ENCODE measurements at regions of chr11 and their contacts with region 1.

Region 1: GRCh38 chr11:119095066-119095880 is 6.4 kb downstream of the DPAGT1 start:
- DNase-seq: peak; percentile 99 to 100
- H3K4me3 ChIP-seq: peak overlapping the region; percentile 85 to 97 (median 92)
- H3K27ac ChIP-seq: peak overlapping the region; percentile 93
- H3K4me1 ChIP-seq: peaks cover 0 to 16% (median 3%) of the 10 kb centered on the region in 4 experiments; a peak in 5 of 7 replicates
- H3K27me3 ChIP-seq: no peaks in the 10 kb centered on the region
- CTCF ChIP-seq: no peak; a peak in 1 of 4 replicates
- EP300 ChIP-seq: no peak
- POLR2A ChIP-seq: peak; percentile 100
- RAD21 ChIP-seq: no peak

Region 2: DNA sequence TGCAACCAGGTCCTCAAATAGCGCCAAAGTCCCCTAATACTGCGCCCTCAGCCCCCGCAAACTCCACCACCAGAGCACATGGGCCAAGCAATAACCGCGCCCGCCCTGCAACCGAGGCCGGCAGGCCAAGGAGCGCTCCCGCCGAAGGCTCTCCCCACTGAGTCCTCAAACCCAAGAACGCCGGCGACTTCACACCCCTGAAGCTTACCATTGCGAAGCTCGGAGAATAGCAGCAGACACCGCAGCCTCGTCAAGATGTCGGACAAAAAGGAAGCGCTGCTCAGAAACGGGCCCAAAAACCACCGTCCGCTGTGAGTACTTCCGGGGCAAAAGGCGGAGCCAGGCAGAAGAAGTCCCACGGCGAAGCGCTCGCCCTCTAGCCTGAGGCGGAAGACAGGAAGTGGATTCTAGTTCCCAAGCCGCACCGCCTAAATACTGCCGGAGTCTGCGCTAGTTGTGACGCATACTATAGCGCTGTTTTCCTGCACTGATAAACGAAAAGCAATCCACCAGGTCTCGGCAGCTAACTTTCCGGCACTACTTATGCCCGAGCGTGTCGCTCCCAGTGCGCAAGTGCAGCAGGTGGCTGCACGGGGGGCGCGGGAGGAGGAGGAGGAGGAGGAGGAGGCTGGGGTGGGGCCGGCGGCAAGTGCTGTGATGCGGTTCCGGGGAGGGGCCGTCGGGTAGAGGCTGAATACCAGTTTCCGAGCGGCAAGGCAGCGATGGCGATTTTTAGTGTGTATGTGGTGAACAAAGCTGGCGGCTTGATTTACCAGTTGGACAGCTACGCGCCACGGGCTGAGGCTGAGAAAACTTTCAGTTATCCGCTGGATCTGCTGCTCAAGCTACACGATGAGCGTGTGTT is 77.0 kb before region 1 on chr11 and contains the starts of genes RPS25 and TRAPPC4:
- CTCF ChIA-PET with region 1: interaction called, 3 read pairs
- POLR2A ChIA-PET with region 1: interaction called, 15 read pairs
- DNase-seq: peak; percentile 88 to 90
- H3K4me3 ChIP-seq: peak within 1 kb of the TSS; percentile 93 to 99 (median 95)
- H3K27ac ChIP-seq: peak within 1 kb of the TSS; percentile 84
- H3K4me1 ChIP-seq: peaks cover 0 to 9% (median 2%) of the 10 kb centered on the region in 4 experiments; a peak in 4 of 7 replicates
- H3K27me3 ChIP-seq: no peaks in the 10 kb centered on the region
- CTCF ChIP-seq: no peak
- EP300 ChIP-seq: peak in 1 of 2 experiments; percentile 22; a peak in 1 of 3 replicates
- POLR2A ChIP-seq: peak; percentile 91 to 95
- RAD21 ChIP-seq: no peak
- total RNA-seq, gene RPS25: 1,525 and 1,551 TPM in 2 replicates
- total RNA-seq, gene TRAPPC4: 88.6 and 94.3 TPM in 2 replicates

Region 3: DNA sequence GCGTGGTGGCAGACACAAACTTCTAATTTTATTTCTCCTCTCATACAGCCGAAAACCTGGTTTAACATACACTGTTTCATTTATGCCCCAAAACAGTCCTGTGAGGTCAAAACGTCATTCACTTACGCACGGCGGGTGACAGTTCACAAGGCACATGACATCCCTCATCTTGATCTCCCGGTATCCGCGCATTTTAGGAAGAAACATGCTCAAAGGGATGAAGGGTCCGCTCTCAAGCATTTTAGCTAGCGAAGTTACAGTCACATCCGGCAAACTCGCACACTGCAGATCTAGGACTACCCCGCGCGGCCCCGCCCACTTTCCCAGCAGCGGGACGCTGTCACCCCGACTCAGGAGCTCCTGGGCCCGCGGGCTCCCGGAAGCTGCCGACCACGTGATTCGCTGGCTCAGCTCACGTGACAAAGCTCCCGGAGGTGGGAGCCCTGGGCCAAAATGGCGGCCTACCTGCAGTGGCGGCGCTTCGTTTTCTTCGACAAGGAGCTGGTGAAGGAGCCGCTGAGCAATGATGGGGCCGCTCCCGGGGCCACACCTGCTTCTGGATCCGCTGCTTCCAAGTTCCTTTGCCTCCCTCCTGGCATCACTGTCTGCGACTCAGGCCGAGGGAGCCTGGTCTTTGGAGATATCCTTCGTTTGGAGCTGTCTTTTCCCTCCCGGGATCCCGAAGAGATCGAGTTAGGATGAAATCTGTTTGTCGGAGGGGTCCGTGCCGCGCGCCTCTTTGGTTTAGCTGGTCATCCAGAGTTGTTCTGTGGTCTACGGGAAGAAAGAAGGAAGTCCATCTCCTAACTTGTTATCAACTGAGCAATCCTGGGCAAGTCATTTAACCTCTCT is 27.7 kb before region 1 on chr11 and contains the start of gene VPS11:
- CTCF ChIA-PET with region 1: interaction called, 8 read pairs
- POLR2A ChIA-PET with region 1: interaction called, 20 read pairs
- DNase-seq: peak; percentile 87 to 96
- H3K4me3 ChIP-seq: peak within 1 kb of the TSS; percentile 82 to 100 (median 98)
- H3K27ac ChIP-seq: peak within 1 kb of the TSS; percentile 82
- H3K4me1 ChIP-seq: no peaks in the 10 kb centered on the region; a peak in 1 of 7 replicates
- H3K27me3 ChIP-seq: no peaks in the 10 kb centered on the region
- CTCF ChIP-seq: no peak
- EP300 ChIP-seq: no peak
- POLR2A ChIP-seq: peak; percentile 43 to 91
- RAD21 ChIP-seq: no peak
- total RNA-seq, gene VPS11: 15.5 and 16.6 TPM in 2 replicates

Region 4: DNA sequence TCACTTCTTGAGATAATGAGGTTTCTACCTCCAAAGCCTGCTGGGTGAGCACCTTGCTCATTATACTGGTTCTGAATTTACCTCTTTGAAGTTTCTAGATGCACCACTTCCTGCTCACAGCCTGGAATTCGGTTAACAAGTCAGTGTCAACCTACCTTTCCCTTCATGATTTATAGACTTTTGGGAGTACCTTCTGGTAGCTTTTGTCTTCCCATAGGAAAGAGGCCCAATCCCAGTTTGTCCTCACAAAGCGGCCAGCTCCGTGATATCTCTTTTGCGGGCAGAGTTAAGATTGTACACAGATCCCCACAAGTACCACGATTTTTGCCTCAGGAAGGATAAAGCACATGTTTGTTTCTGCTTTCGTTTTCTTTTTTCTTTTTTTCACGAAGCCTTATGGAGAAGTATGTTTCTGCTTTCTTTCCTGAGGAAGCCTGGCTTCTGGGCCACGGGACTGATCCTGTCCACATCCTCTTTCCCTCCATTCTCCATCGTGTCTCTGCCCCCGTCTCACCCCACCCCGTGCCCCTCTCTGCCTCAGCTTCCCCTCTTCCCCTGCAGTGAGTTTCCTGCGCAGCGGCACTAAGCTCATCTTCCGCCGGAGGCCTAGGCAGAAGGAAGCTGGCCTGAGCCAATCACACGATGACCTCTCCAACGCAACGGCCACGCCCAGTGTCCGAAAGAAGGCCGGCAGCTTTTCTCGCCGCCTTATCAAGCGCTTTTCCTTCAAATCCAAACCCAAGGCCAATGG is 20.4 kb after region 1 on chr11:
- CTCF ChIA-PET with region 1: interaction called, 6 read pairs
- POLR2A ChIA-PET with region 1: interaction called, 139 read pairs
- DNase-seq: no peak
- H3K4me3 ChIP-seq: no peak overlapping the region
- H3K27ac ChIP-seq: no peak overlapping the region
- H3K4me1 ChIP-seq: peaks cover 0 to 4% (median 1%) of the 10 kb centered on the region in 4 experiments; a peak in 2 of 7 replicates
- H3K27me3 ChIP-seq: no peaks in the 10 kb centered on the region
- CTCF ChIP-seq: no peak
- EP300 ChIP-seq: no peak
- POLR2A ChIP-seq: no peak
- RAD21 ChIP-seq: no peak

Region 5: GRCh38 chr11:119144825-119145486 is 49.7 kb after region 1 on chr11:
- CTCF ChIA-PET with region 1: interaction called, 7 read pairs
- POLR2A ChIA-PET with region 1: interaction called, 12 read pairs
- DNase-seq: peak in 1 of 2 experiments; percentile 80
- H3K4me3 ChIP-seq: no peak overlapping the region
- H3K27ac ChIP-seq: no peak overlapping the region
- H3K4me1 ChIP-seq: peaks cover 5 to 13% (median 9%) of the 10 kb centered on the region in 4 experiments
- H3K27me3 ChIP-seq: peaks cover 11 to 28% (median 21%) of the 10 kb centered on the region in 4 experiments
- CTCF ChIP-seq: peak; percentile 48 to 63 (median 63)
- EP300 ChIP-seq: no peak
- POLR2A ChIP-seq: no peak
- RAD21 ChIP-seq: peak; percentile 30 to 58; a peak in 3 of 4 replicates

Region 6: GRCh38 chr11:119222308-119222707 is 127.0 kb after region 1 on chr11:
- CTCF ChIA-PET with region 1: no interaction called
- POLR2A ChIA-PET with region 1: no interaction called
- DNase-seq: no peak
- H3K4me3 ChIP-seq: no peak overlapping the region
- H3K27ac ChIP-seq: no peak overlapping the region
- H3K4me1 ChIP-seq: no peaks in the 10 kb centered on the region
- H3K27me3 ChIP-seq: no peaks in the 10 kb centered on the region
- CTCF ChIP-seq: no peak
- EP300 ChIP-seq: no peak
- POLR2A ChIP-seq: no peak
- RAD21 ChIP-seq: no peak

Region 7: DNA sequence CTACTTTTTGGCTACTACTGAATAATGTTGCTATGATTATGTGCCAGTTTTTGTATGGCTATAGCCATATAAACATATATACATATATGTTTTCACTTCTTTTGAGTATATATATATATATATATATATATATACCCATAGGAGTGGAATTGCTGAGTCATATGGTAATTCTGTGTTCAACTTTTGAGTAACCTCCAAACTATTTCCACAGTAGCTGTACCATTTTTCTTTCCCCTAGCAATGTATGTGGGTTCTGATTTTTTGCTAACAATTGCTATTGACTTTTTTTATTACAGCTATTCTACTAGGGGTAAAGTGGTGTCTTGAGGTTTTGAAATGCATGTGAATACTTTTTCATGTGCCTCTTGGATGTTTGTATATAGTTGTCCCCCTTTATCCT is 141.2 kb after region 1 on chr11:
- CTCF ChIA-PET with region 1: no interaction called
- POLR2A ChIA-PET with region 1: no interaction called
- DNase-seq: no peak
- H3K4me3 ChIP-seq: no peak overlapping the region
- H3K27ac ChIP-seq: no peak overlapping the region
- H3K4me1 ChIP-seq: no peaks in the 10 kb centered on the region
- H3K27me3 ChIP-seq: no peaks in the 10 kb centered on the region
- CTCF ChIP-seq: no peak
- EP300 ChIP-seq: no peak
- POLR2A ChIP-seq: no peak
- RAD21 ChIP-seq: no peak

Region 8: DNA sequence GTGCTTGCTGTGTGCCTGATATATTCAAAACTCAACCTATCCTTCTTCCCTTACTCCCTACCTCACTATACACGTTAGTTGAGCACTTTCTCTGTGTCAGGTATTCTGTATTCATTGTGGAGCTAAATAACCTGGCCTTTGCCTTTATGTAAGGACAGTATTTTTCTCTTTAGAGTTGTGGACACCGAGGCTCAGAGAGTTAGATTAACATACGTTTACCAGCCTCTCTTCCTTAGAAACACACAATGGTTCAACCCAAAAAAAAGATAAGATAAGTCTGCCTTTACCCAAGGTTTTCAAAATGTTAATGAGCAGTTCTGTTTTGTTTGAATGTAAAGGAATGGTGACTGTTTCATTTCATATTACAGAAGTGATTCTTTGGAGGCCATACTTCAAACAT is 155.8 kb after region 1 on chr11:
- CTCF ChIA-PET with region 1: no interaction called
- POLR2A ChIA-PET with region 1: no interaction called
- DNase-seq: no peak
- H3K4me3 ChIP-seq: no peak overlapping the region
- H3K27ac ChIP-seq: no peak overlapping the region
- H3K4me1 ChIP-seq: no peaks in the 10 kb centered on the region
- H3K27me3 ChIP-seq: no peaks in the 10 kb centered on the region
- CTCF ChIP-seq: no peak
- EP300 ChIP-seq: no peak
- POLR2A ChIP-seq: no peak
- RAD21 ChIP-seq: no peak

Region 9: GRCh38 chr11:119323538-119324033 is 228.3 kb after region 1 on chr11:
- CTCF ChIA-PET with region 1: interaction called, 3 read pairs
- POLR2A ChIA-PET with region 1: interaction called, 28 read pairs
- DNase-seq: peak in 1 of 2 experiments; percentile 98
- H3K4me3 ChIP-seq: no peak overlapping the region
- H3K27ac ChIP-seq: no peak overlapping the region
- H3K4me1 ChIP-seq: peaks cover 10 to 25% (median 20%) of the 10 kb centered on the region in 4 experiments
- H3K27me3 ChIP-seq: peaks cover 0 to 3% (median 1%) of the 10 kb centered on the region in 4 experiments; a peak in 2 of 7 replicates
- CTCF ChIP-seq: peak in 2 of 3 experiments; percentile 83 to 89; a peak in 3 of 4 replicates
- EP300 ChIP-seq: peak in 1 of 2 experiments; percentile 20; a peak in 1 of 3 replicates
- POLR2A ChIP-seq: no peak
- RAD21 ChIP-seq: peak; percentile 78 to 82